ENCODE measurements at regions of chr17 and their contacts with region 1.

Region 1: GRCh38 chr17:43778337-43779144 is at the start of gene DUSP3:
- DNase-seq: peak; percentile 98 to 99
- ATAC-seq: peak; percentile 94
- H3K4me3 ChIP-seq: peak within 1 kb of the TSS; percentile 66 to 89
- H3K27ac ChIP-seq: peak within 1 kb of the TSS; percentile 79 to 98
- H3K4me1 ChIP-seq: peaks cover 0 to 4% of the 10 kb centered on the region in 2 donors
- H3K27me3 ChIP-seq: no peaks in the 10 kb centered on the region
- total RNA-seq, gene DUSP3: 110 to 112 TPM

Region 2: GRCh38 chr17:43545383-43545632 is 233.2 kb before region 1 on chr17:
- intact Hi-C with region 1: no loop called
- DNase-seq: peak; percentile 52 to 77
- ATAC-seq: peak; percentile 54
- H3K4me3 ChIP-seq: peak overlapping the region; percentile 60 to 61
- H3K27ac ChIP-seq: no peak overlapping the region
- H3K4me1 ChIP-seq: no peaks in the 10 kb centered on the region
- H3K27me3 ChIP-seq: no peaks in the 10 kb centered on the region

Region 3: DNA sequence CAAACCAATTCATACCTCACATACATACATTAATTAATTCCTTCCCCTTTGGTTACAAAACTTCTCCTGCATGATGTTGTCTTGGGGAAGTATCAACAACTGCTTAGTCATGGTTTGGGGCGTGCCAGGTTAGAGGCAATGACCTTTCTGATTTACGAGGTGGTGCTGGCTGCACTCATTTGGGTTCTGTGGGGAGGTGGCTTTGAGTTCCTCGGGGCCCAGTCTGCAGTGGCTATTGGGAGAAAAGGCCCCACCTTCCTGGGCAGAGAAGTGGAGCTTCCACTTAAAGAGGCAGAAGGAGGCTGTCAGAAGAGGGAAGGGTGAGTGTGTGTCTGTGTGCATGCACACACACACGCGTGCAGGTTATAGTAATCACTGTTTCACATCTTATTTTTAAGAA is 222.2 kb before region 1 on chr17:
- intact Hi-C with region 1: no loop called
- DNase-seq: peak in 1 of 2 donors; percentile 54
- ATAC-seq: peak; percentile 72
- H3K4me3 ChIP-seq: no peak overlapping the region
- H3K27ac ChIP-seq: no peak overlapping the region
- H3K4me1 ChIP-seq: no peaks in the 10 kb centered on the region
- H3K27me3 ChIP-seq: no peaks in the 10 kb centered on the region

Region 4: DNA sequence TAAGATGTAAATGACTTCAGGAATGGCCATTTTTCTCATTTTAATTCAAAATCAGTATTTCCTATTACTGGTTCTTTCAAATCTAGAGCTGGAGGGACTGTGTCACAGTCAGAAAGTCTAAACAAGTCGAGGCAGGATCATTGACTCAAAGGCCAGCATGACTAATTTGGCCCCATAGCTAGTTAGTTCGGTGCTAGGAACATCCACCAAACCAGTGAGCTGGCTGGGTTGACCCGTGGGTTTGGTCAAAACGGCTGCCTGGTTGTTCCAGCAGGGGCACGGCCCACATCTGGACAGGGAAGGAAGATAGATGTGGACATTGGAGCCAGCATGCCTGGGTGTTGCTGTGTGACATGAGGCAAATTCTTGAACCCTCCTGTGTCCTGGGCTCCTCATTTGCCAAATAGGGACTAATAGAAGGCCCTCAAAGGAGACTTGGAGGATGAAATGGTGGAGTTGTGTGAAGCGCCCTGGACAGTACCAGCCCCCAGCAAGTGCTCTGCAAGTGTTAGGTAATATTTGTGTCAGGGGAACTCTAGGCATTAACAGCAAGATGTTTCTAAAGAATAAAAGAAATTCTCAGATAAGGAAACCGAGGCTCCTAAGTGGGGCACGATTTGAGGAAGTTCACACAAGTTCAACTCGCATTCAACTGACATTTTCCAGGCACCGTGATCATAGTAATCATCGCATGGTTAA is 163.1 kb before region 1 on chr17:
- intact Hi-C with region 1: no loop called
- DNase-seq: no peak
- ATAC-seq: no peak
- H3K4me3 ChIP-seq: no peak overlapping the region
- H3K27ac ChIP-seq: no peak overlapping the region
- H3K4me1 ChIP-seq: no peaks in the 10 kb centered on the region
- H3K27me3 ChIP-seq: no peaks in the 10 kb centered on the region

Region 5: GRCh38 chr17:43734376-43734775 is 44.2 kb before region 1 on chr17:
- intact Hi-C with region 1: no loop called
- DNase-seq: no peak
- ATAC-seq: peak; percentile 56
- H3K4me3 ChIP-seq: no peak overlapping the region
- H3K27ac ChIP-seq: no peak overlapping the region
- H3K4me1 ChIP-seq: peaks cover 0 to 3% of the 10 kb centered on the region in 2 donors
- H3K27me3 ChIP-seq: no peaks in the 10 kb centered on the region

Region 6: GRCh38 chr17:43832976-43833829 is 54.7 kb after region 1 on chr17 and contains the start of gene MPP3:
- intact Hi-C with region 1: loop called (anchors 5 kb)
- DNase-seq: peak; percentile 68 to 90
- ATAC-seq: peak; percentile 93
- H3K4me3 ChIP-seq: peak within 1 kb of the TSS; percentile 74 to 75
- H3K27ac ChIP-seq: no peak within 1 kb of the TSS
- H3K4me1 ChIP-seq: no peaks in the 10 kb centered on the region
- H3K27me3 ChIP-seq: no peaks in the 10 kb centered on the region
- total RNA-seq, gene MPP3: 14.6 to 15.7 TPM

Region 7: GRCh38 chr17:43846221-43846712 is 67.7 kb after region 1 on chr17:
- intact Hi-C with region 1: loop called in 1 of 2 experiments (anchors 5 kb)
- DNase-seq: peak; percentile 90 to 95
- ATAC-seq: peak; percentile 97
- H3K4me3 ChIP-seq: no peak overlapping the region
- H3K27ac ChIP-seq: no peak overlapping the region
- H3K4me1 ChIP-seq: no peaks in the 10 kb centered on the region
- H3K27me3 ChIP-seq: no peaks in the 10 kb centered on the region

Measured in aorta (tissue), 5 donors.